ENCODE measurements at regions of chr5 and their contacts with region 1.

Region 1: DNA sequence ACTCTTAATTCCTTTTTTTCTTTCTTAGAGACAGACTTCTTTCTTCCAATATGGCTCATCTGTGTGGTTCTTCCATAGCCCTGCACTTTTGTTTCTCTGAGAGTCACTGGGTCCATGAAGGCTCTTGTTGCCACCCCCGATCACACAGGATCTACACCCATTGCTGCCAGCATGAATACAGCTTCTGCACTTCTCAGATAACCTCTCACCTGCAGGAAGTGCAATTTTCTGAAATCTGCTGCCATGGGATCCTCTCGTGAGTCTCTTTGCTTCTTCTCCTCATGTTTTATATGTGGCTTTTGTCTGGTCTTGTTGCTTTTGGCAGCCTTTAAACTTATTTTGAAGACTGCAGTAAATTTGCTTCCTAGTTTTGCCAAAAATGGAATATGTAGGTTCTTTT is 171.2 kb downstream of the TMEM167A start:
- DNase-seq: no peak

Region 2: GRCh38 chr5:82931110-82931509 is 25.1 kb after region 1 on chr5:
- intact Hi-C with region 1: loop called in 1 of 2 experiments (anchors 1 kb)
- DNase-seq: no peak

Region 3: DNA sequence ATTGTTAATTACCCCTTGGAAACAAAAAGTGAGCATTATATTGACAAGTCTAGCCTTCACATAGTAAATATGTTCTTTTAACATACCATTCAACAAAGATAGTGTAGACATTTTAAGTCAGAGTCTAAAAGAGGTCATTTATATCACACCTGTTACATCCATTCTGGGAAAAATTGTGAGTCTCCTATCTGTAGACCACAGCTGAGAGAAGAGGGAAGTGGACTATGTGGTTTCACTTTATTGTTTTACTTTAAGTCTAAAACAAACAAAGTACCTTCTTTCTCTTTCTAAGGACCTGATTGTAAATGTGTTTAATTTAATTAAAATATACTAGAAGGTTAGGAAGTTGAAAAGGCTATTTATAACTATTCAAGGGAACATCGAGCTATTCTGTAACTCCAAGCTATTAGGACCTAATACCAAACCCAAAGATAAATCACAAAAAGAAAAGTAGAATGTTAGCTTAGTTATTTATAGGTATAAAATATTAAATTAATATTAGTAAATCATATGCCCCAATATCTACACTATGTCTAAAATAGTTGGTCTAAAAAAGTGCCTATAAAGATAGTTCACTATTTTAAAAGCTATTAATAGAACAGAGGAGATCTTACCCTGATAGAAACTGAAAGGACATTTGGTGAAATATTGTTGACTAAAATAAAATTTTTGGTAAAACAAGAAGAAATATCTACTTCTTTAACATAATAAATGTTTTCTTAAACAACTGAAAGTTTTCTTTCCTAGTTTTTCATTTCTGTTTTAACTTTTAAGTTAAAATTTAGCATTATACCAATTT is 36.3 kb after region 1 on chr5:
- intact Hi-C with region 1: no loop called
- DNase-seq: no peak